ENCODE measurements at regions of chr6 and their contacts with region 1.

Region 1: GRCh38 chr6:26568601-26569432 is 27.9 kb upstream of the ABT1 start:
- DNase-seq: peak; percentile 98
- ATAC-seq: peak; percentile 80
- H3K4me3 Mint-ChIP-seq: peak overlapping the region; percentile 96
- H3K27ac Mint-ChIP-seq: peak overlapping the region; percentile 98
- H3K4me1 Mint-ChIP-seq: peaks cover 26% of the 10 kb centered on the region
- H3K27me3 Mint-ChIP-seq: peaks cover 3% of the 10 kb centered on the region
- CTCF ChIP-seq: no peak

Region 2: DNA sequence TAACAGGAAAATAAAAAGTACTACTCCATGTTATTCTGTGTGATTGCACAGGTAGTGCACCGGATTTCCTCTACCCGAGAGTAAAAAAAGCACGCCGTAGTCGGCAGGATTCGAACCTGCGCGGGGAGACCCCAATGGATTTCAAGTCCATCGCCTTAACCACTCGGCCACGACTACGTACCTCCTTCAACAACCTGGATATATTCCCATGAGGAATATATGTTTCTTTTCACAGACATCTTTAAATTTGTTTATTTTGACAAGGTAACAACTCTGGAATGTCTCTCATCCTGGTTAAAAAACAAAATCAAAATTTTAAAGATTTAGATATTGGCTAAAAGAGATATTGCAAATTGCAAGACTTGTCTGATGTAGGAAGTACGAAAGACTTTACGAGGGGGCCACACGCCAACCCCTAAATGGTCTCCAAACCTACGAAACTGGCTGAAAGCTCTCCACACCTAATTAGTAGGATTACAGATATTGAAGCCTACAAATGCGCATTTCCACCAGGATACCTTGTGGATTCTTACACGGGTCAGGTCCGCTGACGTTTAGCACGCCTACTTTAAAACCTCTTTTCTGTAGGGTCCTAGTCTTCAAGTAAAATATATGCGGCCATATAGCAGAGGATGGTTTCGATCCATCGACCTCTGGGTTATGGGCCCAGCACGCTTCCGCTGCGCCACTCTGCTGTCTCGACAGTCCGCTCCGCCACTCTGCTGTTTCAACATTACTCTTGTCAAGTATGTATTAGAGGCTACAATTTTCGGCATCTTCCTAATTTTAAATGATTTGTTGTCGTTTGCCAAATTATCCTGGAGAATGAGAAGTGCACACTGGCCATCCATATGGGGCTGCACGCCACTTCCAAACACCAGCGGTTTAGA is 256.1 kb before region 1 on chr6:
- CTCF ChIA-PET with region 1: no interaction called
- POLR2A ChIA-PET with region 1: interaction called, 9 read pairs
- intact Hi-C with region 1: loop called (anchors 1 kb)
- DNase-seq: peak; percentile 63
- ATAC-seq: peak; percentile 79
- H3K4me3 Mint-ChIP-seq: peak overlapping the region; percentile 90
- H3K27ac Mint-ChIP-seq: peak overlapping the region; percentile 95
- H3K4me1 Mint-ChIP-seq: peaks cover 28% of the 10 kb centered on the region
- H3K27me3 Mint-ChIP-seq: peaks cover 5% of the 10 kb centered on the region
- CTCF ChIP-seq: no peak

Region 3: GRCh38 chr6:26322645-26323482 is 246.0 kb before region 1 on chr6:
- CTCF ChIA-PET with region 1: interaction called, 5 read pairs
- POLR2A ChIA-PET with region 1: interaction called, 5 read pairs
- intact Hi-C with region 1: loop called (anchors 2 kb)
- DNase-seq: no peak
- ATAC-seq: peak; percentile 56
- H3K4me3 Mint-ChIP-seq: peak overlapping the region; percentile 89
- H3K27ac Mint-ChIP-seq: peak overlapping the region; percentile 85
- H3K4me1 Mint-ChIP-seq: peaks cover 25% of the 10 kb centered on the region
- H3K27me3 Mint-ChIP-seq: peaks cover 14% of the 10 kb centered on the region
- CTCF ChIP-seq: no peak

Region 4: GRCh38 chr6:26342106-26343004 is 226.5 kb before region 1 on chr6:
- CTCF ChIA-PET with region 1: interaction called, 9 read pairs
- POLR2A ChIA-PET with region 1: interaction called, 9 read pairs
- intact Hi-C with region 1: loop called (anchors 1 kb)
- DNase-seq: no peak
- ATAC-seq: no peak
- H3K4me3 Mint-ChIP-seq: no peak overlapping the region
- H3K27ac Mint-ChIP-seq: no peak overlapping the region
- H3K4me1 Mint-ChIP-seq: peaks cover 9% of the 10 kb centered on the region
- H3K27me3 Mint-ChIP-seq: peaks cover 40% of the 10 kb centered on the region
- CTCF ChIP-seq: no peak

Region 5: DNA sequence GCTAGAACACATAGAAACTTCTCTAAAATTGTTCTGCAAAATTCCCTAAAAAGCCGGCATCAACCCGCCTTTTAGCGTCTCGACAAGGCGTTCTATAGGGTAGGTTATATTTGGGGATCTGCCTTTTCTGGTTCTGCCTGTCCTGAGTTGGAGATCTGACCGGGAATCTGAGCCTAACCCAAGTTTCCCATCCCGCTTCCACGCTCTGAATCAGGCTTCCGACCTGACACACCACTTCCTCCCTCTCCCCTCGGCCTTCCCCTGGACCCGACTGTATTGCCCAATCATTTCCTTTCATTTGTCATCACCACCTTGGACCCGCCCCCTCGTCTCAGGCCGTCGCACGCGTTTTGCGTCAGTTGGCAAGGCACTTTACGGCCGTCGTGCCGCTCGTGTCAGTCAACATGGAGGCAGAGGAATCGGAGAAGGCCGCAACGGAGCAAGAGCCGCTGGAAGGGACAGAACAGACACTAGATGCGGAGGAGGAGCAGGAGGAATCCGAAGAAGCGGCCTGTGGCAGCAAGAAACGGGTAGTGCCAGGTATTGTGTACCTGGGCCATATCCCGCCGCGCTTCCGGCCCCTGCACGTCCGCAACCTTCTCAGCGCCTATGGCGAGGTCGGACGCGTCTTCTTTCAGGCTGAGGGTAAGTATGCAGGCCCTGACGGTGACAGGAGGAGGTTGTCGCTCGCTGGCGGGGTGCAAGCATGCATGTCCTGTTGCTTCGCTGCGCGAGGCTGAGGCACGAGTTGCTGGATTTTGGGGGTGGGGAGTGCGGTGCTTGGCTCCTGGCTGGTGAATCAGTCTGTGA is 28.0 kb after region 1 on chr6 and contains the start of gene ABT1:
- CTCF ChIA-PET with region 1: interaction called, 37 read pairs
- POLR2A ChIA-PET with region 1: interaction called, 13 read pairs
- intact Hi-C with region 1: loop called (anchors 1 kb)
- DNase-seq: peak; percentile 91
- ATAC-seq: peak; percentile 90
- H3K4me3 Mint-ChIP-seq: no peak within 1 kb of the TSS
- H3K27ac Mint-ChIP-seq: no peak within 1 kb of the TSS
- H3K4me1 Mint-ChIP-seq: peaks cover 17% of the 10 kb centered on the region
- H3K27me3 Mint-ChIP-seq: peaks cover 5% of the 10 kb centered on the region
- CTCF ChIP-seq: no peak
- total RNA-seq, gene ABT1: 30.7 and 30.8 TPM in 2 replicates

Region 6: DNA sequence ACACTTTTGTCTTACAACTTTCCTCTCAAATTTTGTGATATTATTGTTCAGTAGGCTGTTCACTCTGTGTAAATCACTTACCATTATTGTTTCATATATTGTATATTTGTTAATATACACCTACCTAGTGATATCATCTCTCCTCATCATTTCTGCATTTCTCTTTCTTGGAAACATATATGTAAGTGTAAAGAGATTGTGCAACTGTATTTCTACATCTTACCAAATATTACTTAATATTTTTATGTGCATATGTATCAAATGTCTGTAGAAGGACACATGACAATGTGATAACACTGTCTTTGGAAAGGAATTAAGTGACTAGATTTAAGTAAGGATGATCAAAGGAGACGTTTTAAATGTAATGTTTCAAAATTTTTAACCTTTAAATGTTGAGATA is 60.5 kb after region 1 on chr6:
- CTCF ChIA-PET with region 1: no interaction called
- POLR2A ChIA-PET with region 1: no interaction called
- intact Hi-C with region 1: no loop called
- DNase-seq: no peak
- ATAC-seq: no peak
- H3K4me3 Mint-ChIP-seq: no peak overlapping the region
- H3K27ac Mint-ChIP-seq: no peak overlapping the region
- H3K4me1 Mint-ChIP-seq: no peaks in the 10 kb centered on the region
- H3K27me3 Mint-ChIP-seq: no peaks in the 10 kb centered on the region
- CTCF ChIP-seq: no peak

Region 7: GRCh38 chr6:27078734-27079357 is 510.0 kb after region 1 on chr6:
- CTCF ChIA-PET with region 1: interaction called, 3 read pairs
- POLR2A ChIA-PET with region 1: no interaction called
- intact Hi-C with region 1: loop called (anchors 1 kb)
- DNase-seq: no peak
- ATAC-seq: peak; percentile 65
- H3K4me3 Mint-ChIP-seq: peak overlapping the region; percentile 61
- H3K27ac Mint-ChIP-seq: no peak overlapping the region
- H3K4me1 Mint-ChIP-seq: peaks cover 6% of the 10 kb centered on the region
- H3K27me3 Mint-ChIP-seq: peaks cover 46% of the 10 kb centered on the region
- CTCF ChIP-seq: no peak

Measured in activated B cell treated with CpG ODN at 0.5 μM for 24 hours (primary cell).